ENCODE measurements at regions of chr18 and their contacts with region 1.

Region 1: DNA sequence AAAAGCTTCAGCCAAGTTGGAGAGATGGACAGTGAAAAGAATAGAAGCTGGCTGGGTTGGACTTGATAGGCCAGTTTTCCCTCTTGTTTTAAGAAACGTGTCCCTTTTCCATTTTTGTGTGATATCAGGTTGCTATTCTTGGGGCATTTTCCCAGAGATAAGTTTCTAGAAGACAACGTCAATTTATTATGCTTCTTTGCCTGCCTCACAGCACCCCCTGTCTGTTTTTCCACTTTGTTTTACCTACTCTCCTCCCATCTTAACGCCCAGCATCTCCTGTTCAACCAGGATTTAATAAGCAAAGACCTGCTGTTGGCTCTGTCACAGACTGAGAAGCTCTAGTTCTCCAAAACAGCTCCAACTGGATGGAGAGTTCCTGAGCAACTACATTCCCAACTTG is 317.8 kb upstream of the ZNF521 start:
- DNase-seq: no peak
- ATAC-seq: no peak
- H3K4me3 ChIP-seq: no peak overlapping the region
- H3K27ac ChIP-seq: no peak overlapping the region
- H3K4me1 ChIP-seq: no peaks in the 10 kb centered on the region
- H3K27me3 ChIP-seq: no peaks in the 10 kb centered on the region
- CTCF ChIP-seq: 0 out of 6 replicates have a peak, but pooled peaks of 1 of the 3 experiments have one; percentile 5
- EP300 ChIP-seq: no peak
- POLR2A ChIP-seq: no peak
- RAD21 ChIP-seq: no peak

Region 2: GRCh38 chr18:25621144-25621543 is 48.6 kb before region 1 on chr18:
- CTCF ChIA-PET with region 1: no interaction called
- POLR2A ChIA-PET with region 1: no interaction called
- in situ Hi-C with region 1: no loop called
- intact Hi-C with region 1: loop called (anchors 5 kb)
- DNase-seq: no peak
- ATAC-seq: no peak
- H3K4me3 ChIP-seq: no peak overlapping the region
- H3K27ac ChIP-seq: no peak overlapping the region
- H3K4me1 ChIP-seq: no peaks in the 10 kb centered on the region
- H3K27me3 ChIP-seq: no peaks in the 10 kb centered on the region
- CTCF ChIP-seq: no peak
- EP300 ChIP-seq: no peak
- POLR2A ChIP-seq: no peak
- RAD21 ChIP-seq: no peak

Region 3: GRCh38 chr18:25976554-25976953 is 306.8 kb after region 1 on chr18:
- CTCF ChIA-PET with region 1: no interaction called
- POLR2A ChIA-PET with region 1: no interaction called
- in situ Hi-C with region 1: no loop called
- intact Hi-C with region 1: no loop called
- DNase-seq: no peak
- ATAC-seq: peak; percentile 56
- H3K4me3 ChIP-seq: no peak overlapping the region
- H3K27ac ChIP-seq: no peak overlapping the region
- H3K4me1 ChIP-seq: peaks cover 0 to 4% of the 10 kb centered on the region in 2 experiments; a peak in 2 of 5 replicates
- H3K27me3 ChIP-seq: no peaks in the 10 kb centered on the region
- CTCF ChIP-seq: peak; percentile 17 to 28 (median 21); a peak in 3 of 6 replicates
- EP300 ChIP-seq: no peak
- POLR2A ChIP-seq: no peak
- RAD21 ChIP-seq: no peak

Measured in K562 (cell line).